ENCODE measurements at regions of chr17 and their contacts with region 1.

Region 1: GRCh38 chr17:68035523-68036303 is at the start of gene KPNA2:
- DNase-seq: peak; percentile 94
- H3K4me3 Mint-ChIP-seq: peak within 1 kb of the TSS; percentile 96
- H3K27ac Mint-ChIP-seq: peak within 1 kb of the TSS; percentile 96
- H3K4me1 Mint-ChIP-seq: peaks cover 22% of the 10 kb centered on the region
- H3K27me3 Mint-ChIP-seq: no peaks in the 10 kb centered on the region
- total RNA-seq, gene KPNA2: 247 and 255 TPM in 2 replicates

Region 2: DNA sequence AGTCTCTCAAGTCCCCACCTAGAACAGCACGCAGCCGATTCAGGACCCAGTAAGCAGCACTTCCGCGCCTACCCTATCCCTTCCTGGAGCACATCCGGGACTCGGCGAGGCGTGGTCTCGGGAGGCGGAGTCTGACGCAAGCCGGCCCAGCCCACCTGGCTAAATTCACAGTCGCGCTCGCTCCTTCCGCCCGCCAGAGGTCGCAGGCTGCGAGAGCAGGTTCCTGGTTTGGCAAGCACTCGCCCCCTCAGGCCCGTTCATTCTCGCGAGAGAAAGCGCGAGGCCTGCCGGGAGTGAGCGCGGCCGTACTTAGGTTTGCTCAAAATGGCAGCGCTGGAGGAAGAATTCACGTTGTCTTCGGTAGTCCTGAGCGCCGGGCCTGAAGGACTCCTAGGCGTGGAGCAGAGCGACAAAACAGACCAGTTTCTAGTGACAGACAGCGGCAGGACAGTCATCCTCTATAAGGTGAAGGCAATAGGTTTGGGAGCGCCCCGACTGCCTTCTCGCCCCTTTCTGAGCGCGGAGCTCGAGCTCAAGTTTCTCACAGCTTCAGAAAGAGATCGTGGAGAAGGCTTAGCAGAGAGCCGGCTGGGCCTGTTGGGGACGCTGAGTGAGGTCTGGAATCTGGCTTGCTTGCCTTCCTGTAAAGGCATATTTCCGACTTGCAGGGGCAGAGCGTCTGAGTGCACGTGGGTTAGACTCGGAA is 317.9 kb before region 1 on chr17 and contains the start of gene NOL11:
- intact Hi-C with region 1: loop called (anchors 5 kb)
- DNase-seq: peak; percentile 99
- H3K4me3 Mint-ChIP-seq: peak within 1 kb of the TSS; percentile 100
- H3K27ac Mint-ChIP-seq: peak within 1 kb of the TSS; percentile 100
- H3K4me1 Mint-ChIP-seq: peaks cover 13% of the 10 kb centered on the region
- H3K27me3 Mint-ChIP-seq: no peaks in the 10 kb centered on the region
- total RNA-seq, gene NOL11: 81.5 and 96.2 TPM in 2 replicates

Region 3: DNA sequence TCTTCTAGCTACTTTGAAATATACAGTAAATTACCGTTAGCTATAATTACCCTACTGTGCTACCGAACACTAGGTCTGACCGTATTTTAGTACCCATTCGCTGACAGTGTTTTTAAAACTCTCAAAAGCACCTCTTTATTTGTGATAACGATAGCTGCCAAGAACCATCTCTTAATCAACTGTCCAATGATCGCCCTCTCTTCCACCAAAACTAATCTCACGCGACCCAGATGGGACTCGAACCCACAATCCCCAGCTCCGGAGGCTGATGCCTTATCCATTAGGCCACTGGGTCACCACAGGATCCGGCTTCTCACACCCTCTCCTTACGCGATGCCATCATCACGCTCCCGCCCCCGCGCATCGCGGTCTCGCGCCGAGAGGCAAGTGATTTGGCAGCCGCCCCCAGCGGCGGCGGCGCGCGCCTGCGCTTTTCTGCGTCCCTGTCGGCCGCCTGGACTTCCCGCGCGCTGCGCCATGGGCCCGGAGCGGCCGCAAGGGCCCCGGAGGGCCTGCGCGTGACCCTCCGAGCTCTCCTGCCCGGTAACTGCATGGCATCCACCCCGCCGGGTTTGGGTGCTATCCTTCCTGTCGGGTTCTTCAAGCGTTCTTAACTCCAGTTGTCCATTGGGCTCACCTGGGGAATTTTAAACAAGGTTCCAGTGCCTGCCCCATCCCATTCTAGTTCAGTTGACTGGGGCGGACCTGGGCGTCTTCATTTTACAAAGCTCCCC is 15.9 kb before region 1 on chr17:
- intact Hi-C with region 1: loop called (anchors 1 kb)
- DNase-seq: peak; percentile 97
- H3K4me3 Mint-ChIP-seq: peak overlapping the region; percentile 81
- H3K27ac Mint-ChIP-seq: peak overlapping the region; percentile 81
- H3K4me1 Mint-ChIP-seq: peaks cover 10% of the 10 kb centered on the region
- H3K27me3 Mint-ChIP-seq: peaks cover 8% of the 10 kb centered on the region

Region 4: GRCh38 chr17:68085767-68086381 is 50.2 kb after region 1 on chr17:
- intact Hi-C with region 1: no loop called
- DNase-seq: no peak
- H3K4me3 Mint-ChIP-seq: peak overlapping the region; percentile 47
- H3K27ac Mint-ChIP-seq: peak overlapping the region; percentile 87
- H3K4me1 Mint-ChIP-seq: peaks cover 44% of the 10 kb centered on the region
- H3K27me3 Mint-ChIP-seq: no peaks in the 10 kb centered on the region

Region 5: DNA sequence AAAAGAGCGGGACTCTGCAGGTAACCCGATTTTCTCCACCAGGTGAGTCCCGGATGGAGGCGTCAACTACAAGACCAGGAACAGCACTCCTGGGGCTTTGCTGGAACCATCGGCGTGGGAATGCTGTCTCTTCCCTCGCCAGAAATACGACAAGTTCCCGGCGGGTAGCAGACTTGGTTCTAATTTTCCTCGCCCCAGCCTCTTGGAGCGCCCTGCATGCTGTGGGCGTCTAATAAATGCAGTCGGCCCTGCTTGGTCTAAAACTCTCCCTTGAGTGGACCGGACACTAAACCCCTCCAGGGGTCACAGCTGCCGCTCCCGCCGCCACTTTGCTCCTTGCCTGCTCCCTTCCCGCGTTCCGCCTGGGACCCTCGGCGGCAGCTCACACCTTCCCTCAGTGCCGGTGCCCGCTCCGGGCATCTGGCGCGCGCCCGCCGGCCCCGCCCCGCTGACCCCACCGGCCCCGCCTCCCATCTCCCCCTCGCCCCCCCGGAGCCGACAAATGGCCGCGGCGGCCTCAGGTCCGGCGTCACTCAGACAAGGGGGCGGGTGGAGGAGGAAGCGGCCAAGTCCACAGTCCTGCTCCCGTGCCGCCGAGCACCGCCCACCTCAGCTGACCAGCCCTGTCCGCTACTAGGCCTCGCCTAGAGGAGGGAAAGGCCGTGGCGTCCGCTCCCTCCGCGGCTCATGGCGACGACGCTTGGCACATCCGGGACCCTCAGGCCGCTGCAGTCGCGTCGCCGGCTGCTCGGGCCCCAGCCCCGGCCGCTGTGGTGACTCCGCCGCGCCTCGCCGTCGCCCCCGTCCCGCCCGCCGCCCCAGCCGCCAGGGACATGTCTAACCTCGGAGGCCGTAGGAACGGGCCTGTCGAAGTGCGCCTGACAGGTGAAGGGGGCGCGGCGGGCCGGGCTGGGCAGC is 65.6 kb after region 1 on chr17:
- intact Hi-C with region 1: loop called (anchors 10 kb)
- DNase-seq: peak; percentile 55
- H3K4me3 Mint-ChIP-seq: peak overlapping the region; percentile 91
- H3K27ac Mint-ChIP-seq: peak overlapping the region; percentile 77
- H3K4me1 Mint-ChIP-seq: peaks cover 26% of the 10 kb centered on the region
- H3K27me3 Mint-ChIP-seq: no peaks in the 10 kb centered on the region

Region 6: GRCh38 chr17:68302066-68302601 is 266.4 kb after region 1 on chr17:
- intact Hi-C with region 1: no loop called
- DNase-seq: no peak
- H3K4me3 Mint-ChIP-seq: no peak overlapping the region
- H3K27ac Mint-ChIP-seq: no peak overlapping the region
- H3K4me1 Mint-ChIP-seq: peaks cover 22% of the 10 kb centered on the region
- H3K27me3 Mint-ChIP-seq: no peaks in the 10 kb centered on the region